ENCODE measurements at regions of chr6 and their contacts with region 1.

Region 1: GRCh38 chr6:160455541-160456213 is 107.5 kb downstream of the SLC22A3 start:
- DNase-seq: peak; percentile 70
- ATAC-seq: peak; percentile 58
- H3K4me3 ChIP-seq: no peak overlapping the region
- H3K4me3 Mint-ChIP-seq: no peak overlapping the region
- H3K27ac ChIP-seq: no peak overlapping the region
- H3K27ac Mint-ChIP-seq: no peak overlapping the region
- H3K4me1 ChIP-seq: peaks cover 25 to 32% of the 10 kb centered on the region in 2 donors
- H3K4me1 Mint-ChIP-seq: peaks cover 23% of the 10 kb centered on the region
- H3K27me3 ChIP-seq: peaks cover 0 to 3% (median 0%) of the 10 kb centered on the region in 4 experiments
- H3K27me3 Mint-ChIP-seq: peaks cover 7% of the 10 kb centered on the region
- CTCF ChIP-seq: peak; percentile 88

Region 2: DNA sequence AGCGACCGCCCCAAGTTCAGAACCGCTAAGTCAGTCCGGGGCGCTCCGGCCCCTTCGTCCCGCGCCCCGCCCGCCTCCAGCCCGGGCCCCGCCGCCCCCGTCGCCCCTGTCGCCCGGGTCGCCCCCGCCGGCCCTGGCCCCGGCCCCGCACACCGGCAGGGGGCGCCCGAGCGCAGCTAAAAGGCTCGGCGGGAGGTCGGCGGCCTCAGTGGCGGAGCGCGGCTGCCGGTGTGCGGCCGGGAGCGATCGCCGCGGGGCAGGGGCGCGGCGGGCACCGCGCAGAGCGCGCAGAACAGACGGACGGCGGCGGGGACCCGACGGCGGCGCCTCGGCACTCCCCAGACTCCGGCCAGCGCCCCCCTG is 1286.5 kb before region 1 on chr6 and contains the start of gene FNDC1:
- CTCF ChIA-PET with region 1: interaction called, 4 read pairs
- POLR2A ChIA-PET with region 1: no interaction called
- intact Hi-C with region 1: loop called (anchors 10 kb)
- DNase-seq: peak; percentile 66
- ATAC-seq: peak; percentile 86
- H3K4me3 ChIP-seq: peak within 1 kb of the TSS in 3 of 5 experiments; percentile 32 to 51 (median 34)
- H3K4me3 Mint-ChIP-seq: peak within 1 kb of the TSS; percentile 84
- H3K27ac ChIP-seq: no peak within 1 kb of the TSS
- H3K27ac Mint-ChIP-seq: no peak within 1 kb of the TSS
- H3K4me1 ChIP-seq: peaks cover 15 to 20% of the 10 kb centered on the region in 2 donors
- H3K4me1 Mint-ChIP-seq: peaks cover 21% of the 10 kb centered on the region
- H3K27me3 ChIP-seq: peaks cover 0 to 62% (median 54%) of the 10 kb centered on the region in 4 experiments
- H3K27me3 Mint-ChIP-seq: peaks cover 80% of the 10 kb centered on the region
- CTCF ChIP-seq: peak; percentile 18
- total RNA-seq, gene FNDC1: not detected in 2 replicates

Region 3: GRCh38 chr6:159720708-159721107 is 735.0 kb before region 1 on chr6:
- CTCF ChIA-PET with region 1: interaction called, 4 read pairs
- POLR2A ChIA-PET with region 1: interaction called, 9 read pairs
- intact Hi-C with region 1: loop called (anchors 5 kb)
- DNase-seq: peak; percentile 77
- ATAC-seq: peak; percentile 57
- H3K4me3 ChIP-seq: no peak overlapping the region
- H3K4me3 Mint-ChIP-seq: no peak overlapping the region
- H3K27ac ChIP-seq: no peak overlapping the region
- H3K27ac Mint-ChIP-seq: no peak overlapping the region
- H3K4me1 ChIP-seq: peaks cover 0 to under 1% of the 10 kb centered on the region in 2 donors
- H3K4me1 Mint-ChIP-seq: peaks cover under 1% of the 10 kb centered on the region
- H3K27me3 ChIP-seq: no peaks in the 10 kb centered on the region
- H3K27me3 Mint-ChIP-seq: no peaks in the 10 kb centered on the region
- CTCF ChIP-seq: peak; percentile 77

Region 4: DNA sequence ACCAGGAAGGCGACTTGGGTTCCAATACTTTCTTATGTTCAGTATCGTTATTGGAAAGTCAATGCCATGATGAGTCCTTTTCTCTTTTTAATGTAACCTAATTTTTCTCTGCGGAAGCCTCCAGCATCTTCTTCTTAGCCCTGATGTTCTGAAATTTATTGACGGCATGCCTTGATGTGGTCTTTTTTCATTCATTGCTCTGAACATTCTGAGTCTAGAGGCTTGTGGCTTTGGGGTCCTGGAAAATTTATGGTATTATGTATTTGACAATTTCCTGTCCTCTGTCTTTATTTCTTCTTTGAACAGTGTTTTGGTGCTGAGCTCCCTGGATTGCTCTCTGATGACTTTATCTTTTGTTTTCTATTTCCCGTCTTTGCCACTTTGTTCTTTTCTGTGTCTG is 593.6 kb before region 1 on chr6:
- CTCF ChIA-PET with region 1: interaction called, 28 read pairs
- POLR2A ChIA-PET with region 1: no interaction called
- intact Hi-C with region 1: loop called (anchors 1 kb)
- DNase-seq: no peak
- ATAC-seq: no peak
- H3K4me3 ChIP-seq: no peak overlapping the region
- H3K4me3 Mint-ChIP-seq: no peak overlapping the region
- H3K27ac ChIP-seq: no peak overlapping the region
- H3K27ac Mint-ChIP-seq: no peak overlapping the region
- H3K4me1 ChIP-seq: no peaks in the 10 kb centered on the region
- H3K4me1 Mint-ChIP-seq: no peaks in the 10 kb centered on the region
- H3K27me3 ChIP-seq: peaks cover 0 to 7% (median 3%) of the 10 kb centered on the region in 4 experiments
- H3K27me3 Mint-ChIP-seq: peaks cover 24% of the 10 kb centered on the region
- CTCF ChIP-seq: no peak

Region 5: GRCh38 chr6:160348142-160349019 is 107.3 kb before region 1 on chr6 and contains the start of gene SLC22A3:
- CTCF ChIA-PET with region 1: no interaction called
- POLR2A ChIA-PET with region 1: no interaction called
- intact Hi-C with region 1: no loop called
- DNase-seq: no peak
- ATAC-seq: no peak
- H3K4me3 ChIP-seq: no peak within 1 kb of the TSS
- H3K4me3 Mint-ChIP-seq: no peak within 1 kb of the TSS
- H3K27ac ChIP-seq: no peak within 1 kb of the TSS
- H3K27ac Mint-ChIP-seq: no peak within 1 kb of the TSS
- H3K4me1 ChIP-seq: no peaks in the 10 kb centered on the region
- H3K4me1 Mint-ChIP-seq: peaks cover 3% of the 10 kb centered on the region
- H3K27me3 ChIP-seq: peaks cover 0 to 18% (median 3%) of the 10 kb centered on the region in 4 experiments
- H3K27me3 Mint-ChIP-seq: peaks cover 45% of the 10 kb centered on the region
- CTCF ChIP-seq: no peak
- total RNA-seq, gene SLC22A3: not detected in 2 replicates

Region 6: GRCh38 chr6:160445130-160445529 is 10.5 kb before region 1 on chr6:
- CTCF ChIA-PET with region 1: interaction called, 12 read pairs
- POLR2A ChIA-PET with region 1: no interaction called
- intact Hi-C with region 1: no loop called
- DNase-seq: no peak
- ATAC-seq: no peak
- H3K4me3 ChIP-seq: no peak overlapping the region
- H3K4me3 Mint-ChIP-seq: no peak overlapping the region
- H3K27ac ChIP-seq: no peak overlapping the region
- H3K27ac Mint-ChIP-seq: no peak overlapping the region
- H3K4me1 ChIP-seq: no peaks in the 10 kb centered on the region
- H3K4me1 Mint-ChIP-seq: no peaks in the 10 kb centered on the region
- H3K27me3 ChIP-seq: peaks cover 0 to 11% (median 2%) of the 10 kb centered on the region in 4 experiments
- H3K27me3 Mint-ChIP-seq: peaks cover 50% of the 10 kb centered on the region
- CTCF ChIP-seq: no peak